Activated T-helper 2 cell treated with anti-CD3 and anti-CD28 coated beads, Interferon-gamma antibody, Interleukin-2, Interleukin-4, amounts not matched to agents 10 μg/mL and 5 μg/mL and 100 μg/mL, durations not matched to agents 14 hours and 24 hours and 36 hours (primary cell): ENCODE measurements at regions of chr2 and their contacts with region 1.

Region 1: DNA sequence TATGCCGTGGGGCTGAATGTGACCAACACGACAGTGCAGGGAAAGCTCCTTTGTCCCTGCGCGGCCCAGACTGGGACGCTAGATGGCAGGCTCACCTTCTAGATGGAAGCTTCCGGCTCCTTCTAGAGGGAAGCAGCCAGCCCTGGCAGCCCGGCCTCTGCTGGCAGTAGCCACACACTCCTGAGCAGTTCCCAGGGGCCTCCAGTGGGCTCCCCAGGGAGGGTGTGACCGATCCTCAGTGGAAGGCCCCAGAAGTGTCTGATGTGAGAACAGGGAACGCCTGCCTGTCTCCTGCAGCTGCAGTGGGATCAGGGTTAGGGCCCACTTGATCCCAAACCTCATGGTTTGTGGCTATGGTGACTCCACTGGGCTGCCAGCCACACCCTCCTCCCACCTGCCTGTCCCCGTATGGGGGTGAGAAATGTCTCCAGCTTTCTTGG is 48.5 kb upstream of the LRPPRC start:
- DNase-seq: peak; percentile 73
- H3K4me3 Mint-ChIP-seq: no peak overlapping the region
- H3K27ac Mint-ChIP-seq: no peak overlapping the region
- H3K4me1 Mint-ChIP-seq: no peaks in the 10 kb centered on the region
- H3K27me3 Mint-ChIP-seq: peaks cover 7% of the 10 kb centered on the region

Region 2: DNA sequence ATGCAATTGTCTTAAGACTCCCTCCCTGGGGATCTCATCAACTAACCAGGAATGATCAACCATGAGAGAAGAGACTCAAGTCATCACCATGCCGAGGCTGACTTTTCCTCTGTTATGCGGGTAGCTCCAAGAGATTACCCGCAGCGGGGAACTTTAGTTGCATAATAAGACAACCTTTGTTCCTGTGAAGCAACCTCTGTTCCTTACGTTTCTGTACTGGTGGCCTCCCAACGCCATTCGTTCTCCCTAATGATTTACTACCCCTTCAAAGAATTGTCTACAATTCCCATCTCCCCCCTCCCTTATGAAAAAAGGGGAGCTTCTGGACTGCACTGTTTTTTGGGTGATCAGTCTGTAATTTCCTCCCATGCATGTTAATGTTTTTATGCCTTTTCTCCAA is 17.6 kb after region 1 on chr2:
- intact Hi-C with region 1: no loop called
- DNase-seq: no peak
- H3K4me3 Mint-ChIP-seq: no peak overlapping the region
- H3K27ac Mint-ChIP-seq: no peak overlapping the region
- H3K4me1 Mint-ChIP-seq: no peaks in the 10 kb centered on the region
- H3K27me3 Mint-ChIP-seq: no peaks in the 10 kb centered on the region

Region 3: GRCh38 chr2:44137872-44138551 is 93.7 kb after region 1 on chr2:
- intact Hi-C with region 1: no loop called
- DNase-seq: no peak
- H3K4me3 Mint-ChIP-seq: no peak overlapping the region
- H3K27ac Mint-ChIP-seq: no peak overlapping the region
- H3K4me1 Mint-ChIP-seq: peaks cover 2% of the 10 kb centered on the region
- H3K27me3 Mint-ChIP-seq: peaks cover 20% of the 10 kb centered on the region

Region 4: GRCh38 chr2:44233450-44234128 is 189.3 kb after region 1 on chr2:
- intact Hi-C with region 1: loop called (anchors 5 kb)
- DNase-seq: no peak
- H3K4me3 Mint-ChIP-seq: no peak overlapping the region
- H3K27ac Mint-ChIP-seq: no peak overlapping the region
- H3K4me1 Mint-ChIP-seq: peaks cover 15% of the 10 kb centered on the region
- H3K27me3 Mint-ChIP-seq: no peaks in the 10 kb centered on the region

Region 5: GRCh38 chr2:44342854-44343253 is 298.6 kb after region 1 on chr2:
- intact Hi-C with region 1: loop called (anchors 5 kb)
- DNase-seq: no peak
- H3K4me3 Mint-ChIP-seq: no peak overlapping the region
- H3K27ac Mint-ChIP-seq: no peak overlapping the region
- H3K4me1 Mint-ChIP-seq: no peaks in the 10 kb centered on the region
- H3K27me3 Mint-ChIP-seq: no peaks in the 10 kb centered on the region

Region 6: GRCh38 chr2:44479122-44479887 is 435.0 kb after region 1 on chr2:
- intact Hi-C with region 1: loop called (anchors 1 kb)
- DNase-seq: peak; percentile 29
- H3K4me3 Mint-ChIP-seq: no peak overlapping the region
- H3K27ac Mint-ChIP-seq: no peak overlapping the region
- H3K4me1 Mint-ChIP-seq: peaks cover 4% of the 10 kb centered on the region
- H3K27me3 Mint-ChIP-seq: no peaks in the 10 kb centered on the region